PC-3 (cell line): ENCODE measurements at regions of chr4 and their contacts with region 1.

Region 1: GRCh38 chr4:90293320-90293719 is 166.1 kb downstream of the CCSER1 start:
- DNase-seq: peak; percentile 32
- ATAC-seq: no peak
- H3K4me3 ChIP-seq: no peak overlapping the region
- H3K27ac ChIP-seq: no peak overlapping the region
- H3K4me1 ChIP-seq: no peaks in the 10 kb centered on the region
- H3K27me3 ChIP-seq: no peaks in the 10 kb centered on the region
- CTCF ChIP-seq: peak; percentile 21; the same call in 1 of the 2 replicates

Region 2: GRCh38 chr4:89949782-89950387 is 343.4 kb before region 1 on chr4:
- CTCF ChIA-PET with region 1: no interaction called
- POLR2A ChIA-PET with region 1: no interaction called
- intact Hi-C with region 1: loop called (anchors 1 kb)
- DNase-seq: peak; percentile 50
- ATAC-seq: 0 out of 2 replicates have a peak, but pooled peaks have one; percentile 50
- H3K4me3 ChIP-seq: no peak overlapping the region
- H3K27ac ChIP-seq: no peak overlapping the region
- H3K4me1 ChIP-seq: no peaks in the 10 kb centered on the region
- H3K27me3 ChIP-seq: peaks cover 59% of the 10 kb centered on the region
- CTCF ChIP-seq: peak; percentile 86

Region 3: GRCh38 chr4:90078440-90078839 is 214.9 kb before region 1 on chr4:
- CTCF ChIA-PET with region 1: no interaction called
- POLR2A ChIA-PET with region 1: no interaction called
- intact Hi-C with region 1: no loop called
- DNase-seq: peak; percentile 61
- ATAC-seq: no peak
- H3K4me3 ChIP-seq: no peak overlapping the region
- H3K27ac ChIP-seq: no peak overlapping the region
- H3K4me1 ChIP-seq: peaks cover 8% of the 10 kb centered on the region; the same call in 1 of the 2 replicates
- H3K27me3 ChIP-seq: 0 out of 2 replicates have a peak, but pooled peaks cover 4% of the 10 kb centered on the region
- CTCF ChIP-seq: no peak

Region 4: GRCh38 chr4:90165883-90166282 is 127.4 kb before region 1 on chr4:
- CTCF ChIA-PET with region 1: no interaction called
- POLR2A ChIA-PET with region 1: no interaction called
- intact Hi-C with region 1: no loop called
- DNase-seq: no peak
- ATAC-seq: no peak
- H3K4me3 ChIP-seq: no peak overlapping the region
- H3K27ac ChIP-seq: no peak overlapping the region
- H3K4me1 ChIP-seq: 0 out of 2 replicates have a peak, but pooled peaks cover 5% of the 10 kb centered on the region
- H3K27me3 ChIP-seq: no peaks in the 10 kb centered on the region
- CTCF ChIP-seq: no peak